Heart right ventricle (tissue), 16 donors: ENCODE measurements at regions of chr17 and their contacts with region 1.

Region 1: DNA sequence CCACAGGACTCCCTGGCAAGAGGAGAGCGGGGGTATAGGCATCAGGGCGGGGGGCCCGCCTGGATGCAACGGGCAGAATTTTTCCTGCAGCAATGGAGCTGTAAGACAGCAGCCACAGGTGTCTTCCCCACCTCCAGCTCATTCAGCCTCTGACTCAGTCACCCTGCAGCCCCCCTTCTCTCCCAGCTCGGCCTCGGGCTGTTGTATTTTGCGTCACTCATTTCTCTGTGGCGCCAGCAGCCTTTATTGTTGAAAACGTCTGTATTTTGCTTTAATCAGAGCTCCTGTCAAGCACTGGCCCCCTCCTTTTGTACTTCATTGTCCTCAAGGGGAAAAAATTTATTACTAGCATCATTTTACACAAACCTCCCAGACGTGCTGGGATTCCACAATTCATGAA is 117.7 kb downstream of the WSCD1 start:
- DNase-seq: no peak
- ATAC-seq: no peak
- H3K4me3 ChIP-seq: no peak overlapping the region
- H3K27ac ChIP-seq: no peak overlapping the region
- H3K4me1 ChIP-seq: no peaks in the 10 kb centered on the region
- H3K27me3 ChIP-seq: peaks cover 0 to 16% (median 5%) of the 10 kb centered on the region in 7 donors
- CTCF ChIP-seq: no peak

Region 2: GRCh38 chr17:6241996-6242395 is 54.2 kb after region 1 on chr17:
- intact Hi-C with region 1: loop called in 1 of 10 experiments (anchors 10 kb)
- DNase-seq: no peak
- ATAC-seq: no peak
- H3K4me3 ChIP-seq: no peak overlapping the region
- H3K27ac ChIP-seq: no peak overlapping the region
- H3K4me1 ChIP-seq: no peaks in the 10 kb centered on the region
- H3K27me3 ChIP-seq: peaks cover 0 to 40% (median 9%) of the 10 kb centered on the region in 7 donors
- CTCF ChIP-seq: no peak